GM10248 (cell line): ENCODE measurements at regions of chr20 and their contacts with region 1.

Region 1: DNA sequence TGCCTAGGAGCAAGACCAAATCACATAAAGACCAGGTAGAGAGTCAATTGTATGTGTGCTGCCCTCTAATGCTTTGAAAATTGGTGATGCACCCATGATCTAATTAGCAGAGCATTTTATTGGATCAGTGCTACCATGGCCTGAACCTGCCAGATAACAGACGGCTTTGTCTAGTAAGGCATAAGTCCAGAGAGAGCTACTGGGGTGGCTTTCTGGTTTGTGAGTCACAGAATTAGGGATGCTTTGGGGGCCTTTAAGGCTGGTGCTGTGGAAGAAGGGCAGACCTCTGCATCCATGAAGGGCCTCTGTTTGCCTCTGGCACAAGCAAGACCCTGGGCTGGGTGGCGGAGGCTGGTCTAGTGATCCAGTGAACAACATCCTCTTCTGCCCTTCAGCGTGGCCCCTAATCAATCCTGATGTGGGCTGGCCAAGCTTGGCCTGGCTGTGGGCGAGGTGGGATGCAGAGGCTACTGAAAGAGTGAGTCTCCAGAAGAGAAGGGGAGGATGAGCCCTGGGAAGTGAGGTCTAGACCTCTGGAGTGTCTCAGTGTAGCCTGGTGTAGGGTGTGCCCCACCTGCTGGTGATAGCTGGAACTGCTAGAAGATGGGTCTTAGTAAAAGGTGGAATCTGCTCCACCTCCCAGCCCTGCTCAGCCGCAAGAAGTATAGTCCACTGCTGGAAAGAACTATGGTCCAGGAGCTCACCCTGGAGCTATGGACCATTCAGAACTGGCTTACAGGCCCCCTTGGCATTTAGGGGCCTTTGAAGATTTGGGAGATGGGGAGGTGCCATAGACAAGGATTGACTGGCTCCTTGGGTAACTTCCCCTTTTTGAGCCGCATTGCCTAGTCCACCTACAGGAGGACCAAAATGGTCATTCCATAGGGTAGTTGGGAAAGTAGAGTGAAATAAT is 36.7 kb upstream of the AAR2 start:
- DNase-seq: peak; percentile 80
- CTCF ChIP-seq: peak; percentile 87

Region 2: DNA sequence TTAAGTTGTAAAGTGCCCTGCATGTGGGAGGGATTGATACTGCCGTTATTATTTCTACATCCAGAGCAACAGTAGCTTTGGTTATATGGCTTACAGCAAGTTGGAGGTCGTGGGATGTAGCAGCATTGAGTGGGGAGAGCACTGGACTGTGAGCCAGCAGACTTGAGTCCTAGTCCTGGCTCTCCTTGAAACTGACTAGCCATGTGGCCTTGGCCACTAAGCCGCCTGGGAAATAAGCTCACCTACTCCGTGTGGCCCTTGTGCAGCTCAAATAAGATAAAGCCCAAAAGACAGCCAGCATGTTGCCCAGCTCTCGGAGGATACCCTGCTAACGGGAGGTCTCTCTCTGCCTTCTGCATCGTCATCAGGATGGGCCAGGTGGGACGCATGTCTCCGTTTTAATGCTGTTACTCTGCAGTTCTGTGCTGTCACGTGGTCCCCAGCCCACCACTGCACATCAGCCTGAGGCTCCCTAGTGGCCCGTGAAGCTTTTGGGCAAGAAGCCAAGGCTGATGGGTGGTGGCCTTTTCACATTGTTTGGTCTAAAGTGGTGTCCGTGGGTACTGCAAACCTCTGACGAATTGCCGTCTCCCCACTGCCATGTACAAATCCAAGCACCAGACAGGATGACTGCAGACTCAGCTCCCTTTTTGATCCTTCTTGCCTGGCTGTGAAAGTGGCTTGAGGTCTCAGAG is 37.2 kb before region 1 on chr20:
- CTCF ChIA-PET with region 1: interaction called, 69 read pairs
- POLR2A ChIA-PET with region 1: no interaction called
- DNase-seq: no peak
- CTCF ChIP-seq: no peak

Region 3: DNA sequence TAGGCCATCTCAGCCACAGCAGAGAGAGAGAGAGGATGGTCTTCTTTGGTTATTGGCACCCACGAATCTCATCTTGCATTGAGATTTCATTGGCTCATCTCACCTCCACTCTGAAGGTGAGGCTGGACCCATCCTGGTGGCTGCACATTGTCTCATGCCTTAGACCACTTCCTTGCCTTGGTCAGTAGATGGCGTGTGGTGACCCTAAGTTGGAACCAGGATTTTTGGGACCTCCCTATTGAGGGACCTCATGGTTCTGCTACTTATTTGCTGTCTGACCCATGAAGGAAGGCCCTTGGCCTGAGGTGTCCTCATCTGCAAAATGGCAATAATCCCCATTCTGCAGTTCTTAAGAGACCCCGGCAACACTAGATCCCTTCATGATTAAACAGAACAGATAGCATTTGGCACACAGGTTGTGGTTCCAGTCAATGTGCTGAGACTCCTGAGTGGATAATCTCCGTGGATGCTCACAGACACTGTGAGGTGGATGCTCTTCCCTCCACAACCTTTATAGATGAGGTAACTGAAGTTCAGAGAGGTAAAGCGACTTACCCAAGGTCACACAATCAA is 15.2 kb after region 1 on chr20:
- CTCF ChIA-PET with region 1: interaction called, 63 read pairs
- POLR2A ChIA-PET with region 1: no interaction called
- DNase-seq: peak; percentile 60
- CTCF ChIP-seq: peak; percentile 68

Region 4: DNA sequence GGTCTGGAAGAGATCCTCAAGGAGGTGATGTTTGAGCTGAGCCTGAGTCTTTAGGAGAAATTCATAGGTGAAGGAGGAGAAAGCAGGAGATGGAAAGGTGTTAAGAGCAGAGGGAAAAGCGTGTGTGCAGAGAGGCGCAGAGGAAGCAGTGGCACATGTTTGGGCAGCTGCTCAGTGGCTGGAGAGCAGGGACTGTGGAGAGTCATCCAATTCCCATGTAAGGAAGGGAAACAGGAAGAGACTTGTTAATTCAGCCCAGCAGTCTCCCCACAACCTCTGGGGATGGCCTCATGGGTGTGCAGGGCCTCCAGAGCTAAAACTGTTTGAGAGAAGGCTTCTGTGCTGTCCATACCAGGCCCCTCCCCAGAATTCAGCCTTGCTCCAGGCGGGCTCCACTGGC is 52.9 kb after region 1 on chr20:
- CTCF ChIA-PET with region 1: interaction called, 11 read pairs
- POLR2A ChIA-PET with region 1: no interaction called
- DNase-seq: no peak
- CTCF ChIP-seq: no peak